ENCODE measurements at regions of chr3 and their contacts with region 1.

Region 1: DNA sequence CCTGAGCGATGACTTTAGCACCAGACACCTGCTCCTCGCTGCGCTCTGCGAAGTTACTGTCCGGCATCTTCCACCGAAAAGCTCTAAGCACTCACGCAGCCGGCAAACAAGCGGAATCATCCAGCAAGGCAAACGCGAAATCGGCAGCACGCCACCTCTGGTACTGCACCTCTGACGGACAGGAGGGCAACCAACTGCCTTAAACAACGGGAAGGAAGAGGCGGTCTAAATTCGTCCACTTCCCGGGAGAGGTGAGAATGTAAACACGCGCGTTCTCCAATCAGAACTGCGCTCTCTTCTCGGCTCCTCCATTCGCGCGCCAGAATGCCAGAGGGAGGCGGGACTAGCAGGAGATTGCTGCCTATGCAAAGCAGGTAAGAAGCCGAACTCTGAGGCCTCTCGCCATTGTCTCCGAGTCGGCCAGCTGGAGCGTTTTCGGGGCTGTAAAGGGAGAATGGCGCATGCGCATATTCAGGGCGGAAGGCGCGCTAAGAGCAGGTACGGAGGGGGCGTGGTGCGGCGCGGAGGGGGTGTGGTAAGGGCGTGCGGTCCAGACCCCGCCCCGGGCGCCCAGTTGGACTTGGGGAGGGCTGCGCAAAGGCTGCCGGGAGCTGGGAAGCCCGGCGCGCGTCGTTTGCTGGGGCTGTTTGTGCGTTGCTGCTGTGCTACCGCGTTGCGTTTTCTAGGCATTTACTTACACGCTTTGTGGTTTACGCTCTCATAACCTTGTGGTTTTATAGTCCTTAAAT is at the starts of genes BTD and HACL1:
- DNase-seq: peak; percentile 95 to 100 (median 99)
- ATAC-seq: peak; percentile 92
- H3K4me3 ChIP-seq: peak within 1 kb of the TSS; percentile 93
- H3K4me3 Mint-ChIP-seq: peak within 1 kb of the TSS; percentile 93 to 100 (median 99)
- H3K27ac ChIP-seq: peak within 1 kb of the TSS; percentile 89
- H3K27ac Mint-ChIP-seq: peak within 1 kb of the TSS; percentile 92 to 100 (median 99)
- H3K4me1 ChIP-seq: peaks cover 25 to 31% of the 10 kb centered on the region in 2 donors
- H3K4me1 Mint-ChIP-seq: peaks cover 34 to 67% (median 62%) of the 10 kb centered on the region in 7 donors
- H3K27me3 ChIP-seq: no peaks in the 10 kb centered on the region
- H3K27me3 Mint-ChIP-seq: no peaks in the 10 kb centered on the region
- total RNA-seq, gene BTD: 6.8 to 23.3 (median 15.5) TPM
- total RNA-seq, gene HACL1: 18.7 to 41.4 (median 35.4) TPM

Region 2: GRCh38 chr3:14651440-14652251 is 949.9 kb before region 1 on chr3 and contains the start of gene CCDC174:
- CTCF ChIA-PET with region 1: no interaction called
- POLR2A ChIA-PET with region 1: interaction called, 3 read pairs
- intact Hi-C with region 1: loop called (anchors 1 kb)
- DNase-seq: peak; percentile 84 to 98 (median 96)
- ATAC-seq: peak; percentile 99
- H3K4me3 ChIP-seq: peak within 1 kb of the TSS; percentile 90
- H3K4me3 Mint-ChIP-seq: peak within 1 kb of the TSS; percentile 84 to 100 (median 96)
- H3K27ac ChIP-seq: peak within 1 kb of the TSS; percentile 94
- H3K27ac Mint-ChIP-seq: peak within 1 kb of the TSS; percentile 92 to 100 (median 98)
- H3K4me1 ChIP-seq: peaks cover 21 to 25% of the 10 kb centered on the region in 2 donors
- H3K4me1 Mint-ChIP-seq: peaks cover 25 to 80% (median 66%) of the 10 kb centered on the region in 7 donors
- H3K27me3 ChIP-seq: no peaks in the 10 kb centered on the region
- H3K27me3 Mint-ChIP-seq: peaks cover 0 to 2% (median 0%) of the 10 kb centered on the region in 5 donors
- total RNA-seq, gene CCDC174: 21.6 to 59.2 (median 46.2) TPM

Region 3: GRCh38 chr3:15098503-15099363 is 502.8 kb before region 1 on chr3 and contains the start of gene RBSN:
- CTCF ChIA-PET with region 1: no interaction called
- POLR2A ChIA-PET with region 1: no interaction called
- intact Hi-C with region 1: loop called (anchors 1 to 2 kb)
- DNase-seq: peak; percentile 87 to 96 (median 94)
- ATAC-seq: peak; percentile 87
- H3K4me3 ChIP-seq: peak within 1 kb of the TSS; percentile 83
- H3K4me3 Mint-ChIP-seq: peak within 1 kb of the TSS; percentile 90 to 99 (median 96)
- H3K27ac ChIP-seq: peak within 1 kb of the TSS; percentile 96
- H3K27ac Mint-ChIP-seq: peak within 1 kb of the TSS; percentile 90 to 99 (median 98)
- H3K4me1 ChIP-seq: peaks cover 8 to 14% of the 10 kb centered on the region in 2 donors
- H3K4me1 Mint-ChIP-seq: peaks cover 21 to 42% (median 30%) of the 10 kb centered on the region in 7 donors
- H3K27me3 ChIP-seq: no peaks in the 10 kb centered on the region
- H3K27me3 Mint-ChIP-seq: peaks cover 0 to 9% (median 2%) of the 10 kb centered on the region in 5 donors
- total RNA-seq, gene RBSN: 20.5 to 54.4 (median 39.6) TPM

Region 4: DNA sequence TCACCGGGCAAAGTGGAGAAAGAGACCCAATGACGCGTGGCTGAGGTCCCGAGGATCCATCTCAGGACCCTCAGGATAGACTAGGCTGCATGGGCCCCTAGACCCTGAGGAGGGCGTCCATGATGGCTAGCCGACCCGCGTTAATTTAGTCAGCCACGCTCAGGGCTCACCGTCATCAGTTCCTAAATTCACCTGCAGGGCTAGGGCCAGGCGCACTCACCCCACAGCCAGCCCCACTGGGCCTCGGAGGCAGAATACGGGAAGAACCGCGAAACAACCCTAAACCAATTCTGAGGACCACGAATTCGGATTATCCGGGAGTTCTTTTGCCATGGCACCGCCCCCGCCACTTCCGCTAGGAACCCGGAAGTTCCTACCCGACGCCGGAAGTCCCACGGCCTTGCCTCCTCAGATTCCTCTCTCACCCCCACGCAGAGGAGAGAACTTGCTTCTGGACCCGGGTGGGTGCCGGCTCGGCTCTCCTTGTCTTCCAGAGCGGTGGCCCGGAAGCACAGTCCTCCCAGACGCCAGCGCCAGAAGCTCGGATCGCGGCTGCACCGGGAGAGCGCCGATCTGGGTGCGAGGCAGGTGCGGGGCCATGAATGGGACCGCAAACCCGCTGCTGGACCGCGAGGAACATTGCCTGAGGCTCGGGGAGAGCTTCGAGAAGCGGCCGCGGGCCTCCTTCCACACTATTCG is 174.2 kb before region 1 on chr3 and contains the starts of genes EAF1 and METTL6:
- CTCF ChIA-PET with region 1: no interaction called
- POLR2A ChIA-PET with region 1: no interaction called
- intact Hi-C with region 1: loop called (anchors 1 kb)
- DNase-seq: peak; percentile 71 to 85 (median 84)
- ATAC-seq: peak; percentile 89
- H3K4me3 ChIP-seq: peak within 1 kb of the TSS; percentile 81
- H3K4me3 Mint-ChIP-seq: peak within 1 kb of the TSS; percentile 91 to 100 (median 98)
- H3K27ac ChIP-seq: peak within 1 kb of the TSS; percentile 91
- H3K27ac Mint-ChIP-seq: peak within 1 kb of the TSS; percentile 86 to 99 (median 94)
- H3K4me1 ChIP-seq: peaks cover 18 to 23% of the 10 kb centered on the region in 2 donors
- H3K4me1 Mint-ChIP-seq: peaks cover 47 to 82% (median 62%) of the 10 kb centered on the region in 7 donors
- H3K27me3 ChIP-seq: no peaks in the 10 kb centered on the region
- H3K27me3 Mint-ChIP-seq: no peaks in the 10 kb centered on the region
- total RNA-seq, gene EAF1: 17.8 to 61.9 (median 27.8) TPM
- total RNA-seq, gene METTL6: 7.9 to 23.0 (median 18.3) TPM

Region 5: GRCh38 chr3:15500107-15500724 is 101.4 kb before region 1 on chr3:
- CTCF ChIA-PET with region 1: no interaction called
- POLR2A ChIA-PET with region 1: no interaction called
- intact Hi-C with region 1: no loop called
- DNase-seq: no peak
- ATAC-seq: peak; percentile 67
- H3K4me3 ChIP-seq: no peak overlapping the region
- H3K4me3 Mint-ChIP-seq: peak overlapping the region in 2 of 10 donors; percentile 21 to 43
- H3K27ac ChIP-seq: no peak overlapping the region
- H3K27ac Mint-ChIP-seq: peak overlapping the region in 1 of 9 donors; percentile 0
- H3K4me1 ChIP-seq: peaks cover 0 to 6% of the 10 kb centered on the region in 2 donors
- H3K4me1 Mint-ChIP-seq: peaks cover 0 to 49% (median 0%) of the 10 kb centered on the region in 7 donors
- H3K27me3 ChIP-seq: no peaks in the 10 kb centered on the region
- H3K27me3 Mint-ChIP-seq: peaks cover 0 to 3% (median 0%) of the 10 kb centered on the region in 5 donors

Region 6: GRCh38 chr3:15629860-15630597 is 28.5 kb after region 1 on chr3:
- CTCF ChIA-PET with region 1: interaction called, 3 read pairs
- POLR2A ChIA-PET with region 1: no interaction called
- intact Hi-C with region 1: loop called in 1 of 2 experiments (anchors 2 kb)
- DNase-seq: peak in 8 of 9 donors; percentile 45 to 79 (median 66)
- ATAC-seq: peak; percentile 99
- H3K4me3 ChIP-seq: no peak overlapping the region
- H3K4me3 Mint-ChIP-seq: peak overlapping the region in 8 of 10 donors; percentile 33 to 71 (median 61)
- H3K27ac ChIP-seq: no peak overlapping the region
- H3K27ac Mint-ChIP-seq: peak overlapping the region in 1 of 9 donors; percentile 62
- H3K4me1 ChIP-seq: peaks cover 6 to 8% of the 10 kb centered on the region in 2 donors
- H3K4me1 Mint-ChIP-seq: peaks cover 14 to 49% (median 34%) of the 10 kb centered on the region in 7 donors
- H3K27me3 ChIP-seq: no peaks in the 10 kb centered on the region
- H3K27me3 Mint-ChIP-seq: no peaks in the 10 kb centered on the region

Region 7: GRCh38 chr3:15783361-15783969 is 181.9 kb after region 1 on chr3:
- CTCF ChIA-PET with region 1: no interaction called
- POLR2A ChIA-PET with region 1: no interaction called
- intact Hi-C with region 1: no loop called
- DNase-seq: no peak
- ATAC-seq: no peak
- H3K4me3 ChIP-seq: no peak overlapping the region
- H3K4me3 Mint-ChIP-seq: no peak overlapping the region
- H3K27ac ChIP-seq: no peak overlapping the region
- H3K27ac Mint-ChIP-seq: no peak overlapping the region
- H3K4me1 ChIP-seq: no peaks in the 10 kb centered on the region
- H3K4me1 Mint-ChIP-seq: peaks cover 5 to 32% (median 20%) of the 10 kb centered on the region in 7 donors
- H3K27me3 ChIP-seq: no peaks in the 10 kb centered on the region
- H3K27me3 Mint-ChIP-seq: no peaks in the 10 kb centered on the region

Region 8: DNA sequence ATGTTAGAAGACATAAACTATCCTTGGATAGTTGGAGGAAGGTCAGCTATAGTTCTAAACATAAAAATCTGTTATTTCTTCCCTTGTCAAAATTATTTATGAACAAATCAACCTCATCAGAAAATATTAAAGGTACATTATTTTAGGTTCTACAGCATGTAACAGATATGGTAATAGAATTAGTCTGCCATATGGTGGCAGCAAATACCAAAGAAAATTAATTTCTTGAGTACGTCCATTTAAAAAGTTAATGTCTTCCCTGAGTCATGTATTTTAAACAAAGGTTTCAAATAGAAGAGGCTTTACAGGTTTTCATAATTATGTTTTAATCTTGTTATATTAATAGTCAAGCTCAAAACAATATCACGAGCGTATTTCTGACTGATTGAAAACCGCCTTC is 214.1 kb after region 1 on chr3:
- CTCF ChIA-PET with region 1: no interaction called
- POLR2A ChIA-PET with region 1: no interaction called
- intact Hi-C with region 1: loop called in 1 of 2 experiments (anchors 1 kb)
- DNase-seq: peak in 6 of 9 donors; percentile 12 to 48 (median 28)
- ATAC-seq: peak; percentile 53
- H3K4me3 ChIP-seq: no peak overlapping the region
- H3K4me3 Mint-ChIP-seq: no peak overlapping the region
- H3K27ac ChIP-seq: no peak overlapping the region
- H3K27ac Mint-ChIP-seq: peak overlapping the region in 1 of 9 donors; percentile 59
- H3K4me1 ChIP-seq: peaks cover 0 to 8% of the 10 kb centered on the region in 2 donors
- H3K4me1 Mint-ChIP-seq: peaks cover 6 to 47% (median 43%) of the 10 kb centered on the region in 7 donors
- H3K27me3 ChIP-seq: no peaks in the 10 kb centered on the region
- H3K27me3 Mint-ChIP-seq: no peaks in the 10 kb centered on the region

Region 9: GRCh38 chr3:16842272-16843270 is 1241.0 kb after region 1 on chr3:
- CTCF ChIA-PET with region 1: no interaction called
- POLR2A ChIA-PET with region 1: no interaction called
- intact Hi-C with region 1: loop called in 1 of 2 experiments (anchors 1 kb)
- DNase-seq: peak; percentile 49 to 85 (median 78)
- ATAC-seq: peak; percentile 95
- H3K4me3 ChIP-seq: peak overlapping the region; percentile 61
- H3K4me3 Mint-ChIP-seq: peak overlapping the region; percentile 78 to 93 (median 87)
- H3K27ac ChIP-seq: peak overlapping the region; percentile 76
- H3K27ac Mint-ChIP-seq: peak overlapping the region; percentile 92 to 99 (median 98)
- H3K4me1 ChIP-seq: peaks cover 49 to 51% of the 10 kb centered on the region in 2 donors
- H3K4me1 Mint-ChIP-seq: peaks cover 34 to 96% (median 90%) of the 10 kb centered on the region in 7 donors
- H3K27me3 ChIP-seq: no peaks in the 10 kb centered on the region
- H3K27me3 Mint-ChIP-seq: peaks cover 0 to 6% (median 0%) of the 10 kb centered on the region in 5 donors